ENCODE measurements at regions of chr9 and their contacts with region 1.

Region 1: GRCh38 chr9:112041536-112042243 is 133.4 kb downstream of the SUSD1 start:
- DNase-seq: peak; percentile 99
- H3K4me3 ChIP-seq: no peak overlapping the region
- H3K27ac ChIP-seq: peak overlapping the region; percentile 52
- H3K4me1 ChIP-seq: peaks cover 60% of the 10 kb centered on the region
- H3K27me3 ChIP-seq: no peaks in the 10 kb centered on the region
- CTCF ChIP-seq: no peak

Region 2: DNA sequence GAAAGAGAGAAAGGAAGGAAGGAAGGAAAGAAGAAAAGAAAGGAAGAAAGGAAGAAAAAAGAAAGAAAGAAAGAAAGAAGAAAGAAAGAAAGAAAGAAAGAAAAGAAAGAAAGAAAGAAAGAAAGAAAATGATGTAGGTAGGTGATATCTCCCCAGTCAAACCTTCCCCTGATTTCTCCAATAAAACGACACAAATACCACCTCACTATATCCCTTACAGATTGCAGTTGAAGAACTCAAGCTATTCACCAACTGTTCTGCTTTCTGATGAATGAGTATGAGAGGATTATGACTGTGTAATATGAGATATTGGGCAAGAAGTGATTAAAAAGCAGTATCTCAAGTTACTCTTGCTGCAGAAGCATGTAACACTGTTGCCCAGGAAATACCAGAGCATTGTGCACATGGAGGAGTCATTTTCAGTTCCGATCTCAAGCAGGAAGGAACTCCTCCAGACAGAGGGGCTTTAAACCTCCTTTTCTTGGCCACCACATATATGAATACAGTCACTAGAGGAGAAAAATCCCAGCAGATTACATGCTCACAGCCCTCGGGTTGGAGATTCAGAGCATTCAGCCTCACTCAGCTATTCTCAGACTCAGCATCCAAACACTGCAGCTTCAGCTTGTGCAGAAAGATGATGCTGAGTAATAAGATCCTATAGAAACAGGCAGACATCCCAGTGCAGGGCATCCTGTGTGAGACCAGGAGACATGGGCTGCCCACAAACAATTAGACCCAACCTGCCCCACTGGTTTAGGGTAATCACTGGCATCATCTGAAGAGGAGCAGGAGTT is 83.6 kb before region 1 on chr9:
- CTCF ChIA-PET with region 1: no interaction called
- dilution Hi-C with region 1: no loop called
- in situ Hi-C with region 1: loop called in 1 of 2 experiments (anchors 10 kb)
- intact Hi-C with region 1: loop called (anchors 1 kb)
- DNase-seq: peak; percentile 96
- H3K4me3 ChIP-seq: peak overlapping the region; percentile 0 to 14 (median 10)
- H3K27ac ChIP-seq: peak overlapping the region; percentile 96
- H3K4me1 ChIP-seq: peaks cover 43% of the 10 kb centered on the region
- H3K27me3 ChIP-seq: no peaks in the 10 kb centered on the region
- CTCF ChIP-seq: no peak

Region 3: DNA sequence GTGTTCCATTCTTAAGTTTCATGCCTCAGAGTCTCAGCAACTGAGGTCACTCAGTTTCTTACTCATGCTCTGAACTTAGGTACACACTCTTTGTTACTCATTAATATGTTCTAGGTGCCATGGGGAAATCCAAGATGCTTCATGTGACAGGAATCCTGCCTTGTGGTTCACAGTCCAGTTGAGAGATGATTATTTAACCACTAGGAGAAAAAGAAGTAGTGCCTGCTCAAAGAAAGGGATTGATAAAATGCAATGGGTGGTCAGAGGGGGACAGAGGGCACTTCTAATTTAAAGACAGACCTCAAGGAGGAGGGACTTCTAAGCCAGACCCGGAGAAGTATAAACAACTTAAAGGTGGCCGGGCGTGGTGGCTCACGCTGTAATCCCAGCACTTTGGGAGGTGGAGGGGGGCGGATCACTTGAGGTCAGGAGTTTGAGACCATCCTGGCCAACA is 76.1 kb before region 1 on chr9:
- CTCF ChIA-PET with region 1: no interaction called
- dilution Hi-C with region 1: no loop called
- in situ Hi-C with region 1: loop called in 1 of 2 experiments (anchors 10 kb)
- intact Hi-C with region 1: loop called (anchors 1 kb)
- DNase-seq: peak; percentile 99
- H3K4me3 ChIP-seq: no peak overlapping the region
- H3K27ac ChIP-seq: peak overlapping the region; percentile 93
- H3K4me1 ChIP-seq: peaks cover 35% of the 10 kb centered on the region
- H3K27me3 ChIP-seq: no peaks in the 10 kb centered on the region
- CTCF ChIP-seq: peak; percentile 11 to 22

Region 4: GRCh38 chr9:112029921-112030444 is 11.7 kb before region 1 on chr9:
- CTCF ChIA-PET with region 1: no interaction called
- dilution Hi-C with region 1: no loop called
- in situ Hi-C with region 1: no loop called
- intact Hi-C with region 1: loop called (anchors 1 kb)
- DNase-seq: peak; percentile 98
- H3K4me3 ChIP-seq: no peak overlapping the region
- H3K27ac ChIP-seq: peak overlapping the region; percentile 82
- H3K4me1 ChIP-seq: peaks cover 12% of the 10 kb centered on the region
- H3K27me3 ChIP-seq: no peaks in the 10 kb centered on the region
- CTCF ChIP-seq: no peak

Measured in mammary epithelial cell (primary cell).